B cell (primary cell): ENCODE measurements at regions of chr19 and their contacts with region 1.

Region 1: GRCh38 chr19:23395041-23395721 is at the start of gene ZNF91:
- DNase-seq: peak; percentile 93
- ATAC-seq: peak; percentile 96
- H3K4me3 ChIP-seq: peak within 1 kb of the TSS; percentile 77 to 100 (median 94)
- H3K4me3 Mint-ChIP-seq: peak within 1 kb of the TSS; percentile 98
- H3K27ac ChIP-seq: peak within 1 kb of the TSS; percentile 92 to 96
- H3K27ac Mint-ChIP-seq: peak within 1 kb of the TSS; percentile 97
- H3K4me1 ChIP-seq: peaks cover 16 to 22% of the 10 kb centered on the region in 2 donors
- H3K4me1 Mint-ChIP-seq: peaks cover 39% of the 10 kb centered on the region
- H3K27me3 ChIP-seq: no peaks in the 10 kb centered on the region
- H3K27me3 Mint-ChIP-seq: no peaks in the 10 kb centered on the region
- CTCF ChIP-seq: no peak
- total RNA-seq, gene ZNF91: 79.6 and 89.5 TPM in 2 replicates

Region 2: GRCh38 chr19:22634450-22634827 is 760.7 kb before region 1 on chr19:
- CTCF ChIA-PET with region 1: no interaction called
- POLR2A ChIA-PET with region 1: no interaction called
- intact Hi-C with region 1: loop called (anchors 10 kb)
- DNase-seq: no peak
- ATAC-seq: no peak
- H3K4me3 ChIP-seq: peak overlapping the region; percentile 47 to 74 (median 61)
- H3K4me3 Mint-ChIP-seq: peak overlapping the region; percentile 94
- H3K27ac ChIP-seq: no peak overlapping the region
- H3K27ac Mint-ChIP-seq: peak overlapping the region; percentile 74
- H3K4me1 ChIP-seq: peaks cover 0 to 7% of the 10 kb centered on the region in 2 donors
- H3K4me1 Mint-ChIP-seq: peaks cover 4% of the 10 kb centered on the region
- H3K27me3 ChIP-seq: no peaks in the 10 kb centered on the region
- H3K27me3 Mint-ChIP-seq: no peaks in the 10 kb centered on the region
- CTCF ChIP-seq: no peak

Region 3: DNA sequence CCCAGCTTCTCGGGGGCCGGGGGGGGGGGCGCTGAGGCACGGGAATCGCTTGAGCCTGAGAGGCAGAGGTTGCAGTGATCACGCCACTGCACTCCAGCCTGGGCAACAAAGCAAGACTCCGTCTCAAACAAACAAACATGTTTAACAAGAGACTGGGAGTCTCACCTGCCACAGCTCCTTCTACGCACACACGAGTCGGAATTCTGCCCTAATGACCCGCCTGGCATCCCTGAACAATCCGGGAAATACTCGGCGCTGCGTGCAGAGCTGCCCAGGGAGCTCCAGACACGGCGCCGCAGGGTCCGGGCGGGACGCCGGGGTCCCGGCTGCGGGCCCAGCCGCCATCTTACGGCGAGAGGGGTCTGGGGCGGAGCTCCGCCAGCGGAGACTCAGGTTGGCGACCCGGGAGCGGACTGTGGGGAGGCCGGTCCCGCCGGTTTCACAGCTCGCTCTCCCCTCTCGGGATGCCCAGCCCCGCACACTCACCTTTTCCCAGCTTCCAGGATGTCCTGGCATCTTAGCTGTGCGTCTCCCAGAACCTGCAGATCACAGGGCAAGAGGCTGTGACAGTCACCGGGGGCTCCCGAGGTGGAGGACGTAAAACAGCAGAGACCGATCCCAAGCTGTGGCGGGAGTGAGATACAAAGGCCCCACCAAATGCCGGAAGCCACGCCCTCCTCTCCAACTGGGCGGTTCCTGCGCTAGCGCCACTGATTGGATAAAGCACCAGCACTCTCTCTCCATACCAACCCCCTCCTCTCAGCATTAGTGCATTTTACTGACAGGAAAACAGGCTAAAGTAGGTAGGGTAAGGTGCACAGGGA is 121.4 kb before region 1 on chr19:
- CTCF ChIA-PET with region 1: interaction called, 3 read pairs
- POLR2A ChIA-PET with region 1: interaction called, 8 read pairs
- intact Hi-C with region 1: loop called (anchors 1 kb)
- DNase-seq: peak; percentile 91
- ATAC-seq: peak; percentile 99
- H3K4me3 ChIP-seq: peak overlapping the region; percentile 81 to 99 (median 96)
- H3K4me3 Mint-ChIP-seq: peak overlapping the region; percentile 98
- H3K27ac ChIP-seq: peak overlapping the region; percentile 85 to 89
- H3K27ac Mint-ChIP-seq: peak overlapping the region; percentile 97
- H3K4me1 ChIP-seq: peaks cover 6 to 20% of the 10 kb centered on the region in 2 donors
- H3K4me1 Mint-ChIP-seq: peaks cover 30% of the 10 kb centered on the region
- H3K27me3 ChIP-seq: no peaks in the 10 kb centered on the region
- H3K27me3 Mint-ChIP-seq: no peaks in the 10 kb centered on the region
- CTCF ChIP-seq: no peak

Region 4: GRCh38 chr19:23305555-23305954 is 89.6 kb before region 1 on chr19:
- CTCF ChIA-PET with region 1: no interaction called
- POLR2A ChIA-PET with region 1: no interaction called
- intact Hi-C with region 1: no loop called
- DNase-seq: no peak
- ATAC-seq: no peak
- H3K4me3 ChIP-seq: no peak overlapping the region
- H3K4me3 Mint-ChIP-seq: no peak overlapping the region
- H3K27ac ChIP-seq: no peak overlapping the region
- H3K27ac Mint-ChIP-seq: no peak overlapping the region
- H3K4me1 ChIP-seq: no peaks in the 10 kb centered on the region
- H3K4me1 Mint-ChIP-seq: no peaks in the 10 kb centered on the region
- H3K27me3 ChIP-seq: peaks cover 0 to 3% (median 0%) of the 10 kb centered on the region in 4 experiments
- H3K27me3 Mint-ChIP-seq: peaks cover 4% of the 10 kb centered on the region
- CTCF ChIP-seq: no peak

Region 5: DNA sequence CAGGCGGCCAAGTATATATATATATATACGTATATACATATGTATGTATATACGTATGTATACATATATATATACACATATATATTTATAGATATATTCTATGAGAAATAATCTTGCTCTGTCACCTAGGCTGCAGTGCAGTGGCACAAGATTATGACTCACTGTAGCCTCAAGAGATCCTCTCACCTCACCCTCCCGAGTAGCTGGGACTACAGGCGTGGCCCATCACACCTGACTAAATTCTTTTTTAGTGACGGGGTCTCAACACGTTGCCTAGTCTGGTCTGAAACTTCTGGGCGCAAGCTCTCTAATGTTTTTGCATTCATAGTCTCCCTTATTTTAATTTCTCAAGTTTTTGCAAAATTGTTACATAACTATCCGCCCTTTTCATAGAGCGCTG is 70.7 kb before region 1 on chr19:
- CTCF ChIA-PET with region 1: no interaction called
- POLR2A ChIA-PET with region 1: no interaction called
- intact Hi-C with region 1: no loop called
- DNase-seq: no peak
- ATAC-seq: no peak
- H3K4me3 ChIP-seq: no peak overlapping the region
- H3K4me3 Mint-ChIP-seq: no peak overlapping the region
- H3K27ac ChIP-seq: no peak overlapping the region
- H3K27ac Mint-ChIP-seq: no peak overlapping the region
- H3K4me1 ChIP-seq: no peaks in the 10 kb centered on the region
- H3K4me1 Mint-ChIP-seq: no peaks in the 10 kb centered on the region
- H3K27me3 ChIP-seq: no peaks in the 10 kb centered on the region
- H3K27me3 Mint-ChIP-seq: no peaks in the 10 kb centered on the region
- CTCF ChIP-seq: no peak

Region 6: GRCh38 chr19:23758187-23759074 is 363.2 kb after region 1 on chr19 and contains the start of gene ZNF681:
- CTCF ChIA-PET with region 1: no interaction called
- POLR2A ChIA-PET with region 1: interaction called, 3 read pairs
- intact Hi-C with region 1: loop called (anchors 1 kb)
- DNase-seq: peak; percentile 87
- ATAC-seq: peak; percentile 83
- H3K4me3 ChIP-seq: peak within 1 kb of the TSS; percentile 77 to 99 (median 88)
- H3K4me3 Mint-ChIP-seq: peak within 1 kb of the TSS; percentile 97
- H3K27ac ChIP-seq: peak within 1 kb of the TSS; percentile 85 to 93
- H3K27ac Mint-ChIP-seq: peak within 1 kb of the TSS; percentile 94
- H3K4me1 ChIP-seq: peaks cover 3 to 22% of the 10 kb centered on the region in 2 donors
- H3K4me1 Mint-ChIP-seq: peaks cover 27% of the 10 kb centered on the region
- H3K27me3 ChIP-seq: no peaks in the 10 kb centered on the region
- H3K27me3 Mint-ChIP-seq: no peaks in the 10 kb centered on the region
- CTCF ChIP-seq: peak; percentile 47
- total RNA-seq, gene ZNF681: 6.2 and 8.5 TPM in 2 replicates

Region 7: GRCh38 chr19:24033301-24033962 is 638.3 kb after region 1 on chr19:
- CTCF ChIA-PET with region 1: no interaction called
- POLR2A ChIA-PET with region 1: interaction called, 3 read pairs
- intact Hi-C with region 1: loop called (anchors 2 kb)
- DNase-seq: peak; percentile 84
- ATAC-seq: peak; percentile 98
- H3K4me3 ChIP-seq: peak overlapping the region; percentile 78 to 99 (median 93)
- H3K4me3 Mint-ChIP-seq: peak overlapping the region; percentile 99
- H3K27ac ChIP-seq: peak overlapping the region; percentile 85 to 89
- H3K27ac Mint-ChIP-seq: peak overlapping the region; percentile 98
- H3K4me1 ChIP-seq: peaks cover 24 to 56% of the 10 kb centered on the region in 2 donors
- H3K4me1 Mint-ChIP-seq: peaks cover 35% of the 10 kb centered on the region
- H3K27me3 ChIP-seq: no peaks in the 10 kb centered on the region
- H3K27me3 Mint-ChIP-seq: no peaks in the 10 kb centered on the region
- CTCF ChIP-seq: no peak